Ascending aorta (tissue), 2 donors: ENCODE measurements at regions of chr2 and their contacts with region 1.

Region 1: GRCh38 chr2:26682165-26682564 is 10.4 kb upstream of the KCNK3 start:
- DNase-seq: peak; percentile 29 to 83
- H3K4me3 ChIP-seq: no peak overlapping the region
- H3K27ac ChIP-seq: peak overlapping the region; percentile 83 to 84
- H3K4me1 ChIP-seq: peaks cover 0 to 15% of the 10 kb centered on the region in 2 donors
- H3K27me3 ChIP-seq: no peaks in the 10 kb centered on the region
- CTCF ChIP-seq: no peak

Region 2: GRCh38 chr2:26088032-26088643 is 594.0 kb before region 1 on chr2:
- intact Hi-C with region 1: no loop called
- DNase-seq: no peak
- H3K4me3 ChIP-seq: no peak overlapping the region
- H3K27ac ChIP-seq: no peak overlapping the region
- H3K4me1 ChIP-seq: peaks cover 0 to 13% of the 10 kb centered on the region in 2 donors
- H3K27me3 ChIP-seq: no peaks in the 10 kb centered on the region
- CTCF ChIP-seq: peak; percentile 31 to 56 (median 41)

Region 3: GRCh38 chr2:26456440-26457250 is 225.5 kb before region 1 on chr2:
- intact Hi-C with region 1: no loop called
- DNase-seq: peak in 1 of 2 donors; percentile 53
- H3K4me3 ChIP-seq: no peak overlapping the region
- H3K27ac ChIP-seq: no peak overlapping the region
- H3K4me1 ChIP-seq: no peaks in the 10 kb centered on the region
- H3K27me3 ChIP-seq: no peaks in the 10 kb centered on the region
- CTCF ChIP-seq: no peak

Region 4: DNA sequence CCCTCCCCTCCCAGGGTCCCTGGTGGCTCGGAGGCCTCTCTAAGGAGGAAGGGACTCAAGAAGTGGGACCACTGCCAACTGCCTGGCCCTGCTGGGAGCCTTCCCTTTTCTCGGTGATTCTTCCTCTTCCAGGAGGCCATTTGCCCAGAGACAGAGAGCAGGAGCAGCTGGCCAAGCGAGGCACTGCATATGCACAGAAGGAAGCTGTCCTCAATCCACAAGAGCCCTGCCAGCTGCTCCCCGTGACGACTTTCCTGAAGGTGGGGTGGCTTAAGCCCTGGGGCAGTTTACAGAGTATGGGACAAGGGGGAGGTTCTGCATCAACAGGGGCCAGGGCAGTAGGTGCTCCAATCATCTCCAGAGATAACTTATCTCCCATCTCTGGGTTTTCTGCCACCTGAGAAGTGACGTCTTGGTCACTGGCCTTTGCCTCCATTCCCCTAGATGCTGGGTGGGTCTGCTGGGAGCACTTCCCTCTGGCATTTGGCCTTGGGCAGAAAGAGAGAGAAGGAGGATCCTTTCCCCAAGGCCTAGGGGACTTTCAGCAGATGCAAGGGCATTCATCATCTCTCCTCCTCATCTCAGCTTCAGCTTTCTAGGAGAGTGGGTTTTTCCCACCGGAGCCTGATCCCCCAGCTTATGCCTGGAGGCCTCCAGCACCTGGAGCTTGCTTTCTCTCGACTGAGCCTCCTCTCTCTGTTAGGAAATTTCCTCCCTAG is 69.5 kb before region 1 on chr2:
- intact Hi-C with region 1: loop called (anchors 5 kb)
- DNase-seq: no peak
- H3K4me3 ChIP-seq: no peak overlapping the region
- H3K27ac ChIP-seq: peak overlapping the region; percentile 46 to 57
- H3K4me1 ChIP-seq: peaks cover 16 to 28% of the 10 kb centered on the region in 2 donors
- H3K27me3 ChIP-seq: no peaks in the 10 kb centered on the region
- CTCF ChIP-seq: no peak

Region 5: DNA sequence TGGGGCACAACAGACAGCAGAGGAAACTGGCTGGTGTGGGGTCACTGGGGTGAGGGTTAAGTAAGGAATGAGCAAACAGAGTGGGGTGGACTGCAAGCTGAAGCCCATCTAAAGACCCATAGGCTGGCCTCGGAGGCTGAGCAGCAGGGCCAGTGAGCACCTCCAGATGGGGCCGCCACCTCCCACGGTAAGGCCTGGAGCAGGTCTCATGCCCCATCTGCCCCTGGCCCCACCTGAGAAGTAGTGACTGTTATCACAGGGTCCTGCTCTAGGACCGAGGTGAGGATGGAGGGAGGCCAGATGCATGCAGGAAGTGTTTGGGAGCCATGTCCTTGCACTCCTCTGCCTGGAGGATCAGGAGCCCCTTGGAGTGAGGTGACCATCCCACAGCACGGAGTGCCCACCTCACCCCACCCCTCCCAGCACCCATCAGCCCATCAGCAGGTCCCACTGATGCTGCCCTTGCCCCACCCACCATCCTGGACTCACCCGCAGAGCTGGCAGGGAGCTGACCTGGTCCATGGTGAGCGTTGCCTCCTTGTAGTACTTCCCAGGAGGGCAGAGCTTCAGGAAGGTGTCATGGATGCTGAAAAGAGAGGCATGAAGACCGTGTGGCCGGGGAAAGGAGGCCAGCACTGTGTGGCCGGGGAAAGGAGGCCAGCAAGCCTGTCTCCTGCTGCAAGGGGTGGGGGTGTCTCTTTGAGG is 53.1 kb before region 1 on chr2:
- intact Hi-C with region 1: loop called (anchors 5 kb)
- DNase-seq: no peak
- H3K4me3 ChIP-seq: no peak overlapping the region
- H3K27ac ChIP-seq: no peak overlapping the region
- H3K4me1 ChIP-seq: no peaks in the 10 kb centered on the region
- H3K27me3 ChIP-seq: no peaks in the 10 kb centered on the region
- CTCF ChIP-seq: no peak

Region 6: DNA sequence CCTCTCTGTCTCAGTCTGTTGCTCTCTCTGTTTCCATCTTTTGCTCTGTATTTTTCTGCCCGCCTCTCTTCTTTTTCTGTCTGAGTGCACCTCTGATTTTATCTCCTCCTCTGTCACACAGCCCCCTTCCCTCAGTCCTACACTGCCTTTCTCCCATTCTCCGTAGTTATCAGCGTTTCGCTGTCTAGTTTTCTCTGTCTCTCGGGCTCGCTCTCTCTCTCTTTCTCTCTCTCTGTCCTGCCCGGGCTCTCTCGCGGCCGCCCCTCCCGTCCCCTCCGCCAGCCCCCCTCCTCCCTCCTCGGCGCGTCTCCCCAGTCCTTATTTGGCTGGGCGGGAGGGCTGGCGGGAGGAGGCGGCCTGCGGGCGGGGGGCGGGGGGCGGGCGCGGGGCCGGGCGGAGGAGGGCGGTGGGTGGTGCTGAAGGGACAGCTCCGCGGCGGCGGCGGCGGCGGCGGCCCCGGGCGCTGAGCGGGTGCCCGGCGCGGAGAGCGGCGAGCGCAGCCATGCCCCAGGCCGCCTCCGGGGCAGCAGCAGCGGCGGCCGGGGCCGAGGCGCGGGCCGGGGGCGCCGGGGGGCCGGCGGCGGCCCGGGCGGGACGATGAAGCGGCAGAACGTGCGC is 10.2 kb after region 1 on chr2 and contains the start of gene KCNK3:
- intact Hi-C with region 1: loop called (anchors 1 kb)
- DNase-seq: peak in 1 of 2 donors; percentile 84
- H3K4me3 ChIP-seq: peak within 1 kb of the TSS; percentile 66 to 80
- H3K27ac ChIP-seq: peak within 1 kb of the TSS; percentile 88 to 90
- H3K4me1 ChIP-seq: peaks cover 14 to 19% of the 10 kb centered on the region in 2 donors
- H3K27me3 ChIP-seq: no peaks in the 10 kb centered on the region
- CTCF ChIP-seq: no peak
- total RNA-seq, gene KCNK3: 7.2 TPM

Region 7: DNA sequence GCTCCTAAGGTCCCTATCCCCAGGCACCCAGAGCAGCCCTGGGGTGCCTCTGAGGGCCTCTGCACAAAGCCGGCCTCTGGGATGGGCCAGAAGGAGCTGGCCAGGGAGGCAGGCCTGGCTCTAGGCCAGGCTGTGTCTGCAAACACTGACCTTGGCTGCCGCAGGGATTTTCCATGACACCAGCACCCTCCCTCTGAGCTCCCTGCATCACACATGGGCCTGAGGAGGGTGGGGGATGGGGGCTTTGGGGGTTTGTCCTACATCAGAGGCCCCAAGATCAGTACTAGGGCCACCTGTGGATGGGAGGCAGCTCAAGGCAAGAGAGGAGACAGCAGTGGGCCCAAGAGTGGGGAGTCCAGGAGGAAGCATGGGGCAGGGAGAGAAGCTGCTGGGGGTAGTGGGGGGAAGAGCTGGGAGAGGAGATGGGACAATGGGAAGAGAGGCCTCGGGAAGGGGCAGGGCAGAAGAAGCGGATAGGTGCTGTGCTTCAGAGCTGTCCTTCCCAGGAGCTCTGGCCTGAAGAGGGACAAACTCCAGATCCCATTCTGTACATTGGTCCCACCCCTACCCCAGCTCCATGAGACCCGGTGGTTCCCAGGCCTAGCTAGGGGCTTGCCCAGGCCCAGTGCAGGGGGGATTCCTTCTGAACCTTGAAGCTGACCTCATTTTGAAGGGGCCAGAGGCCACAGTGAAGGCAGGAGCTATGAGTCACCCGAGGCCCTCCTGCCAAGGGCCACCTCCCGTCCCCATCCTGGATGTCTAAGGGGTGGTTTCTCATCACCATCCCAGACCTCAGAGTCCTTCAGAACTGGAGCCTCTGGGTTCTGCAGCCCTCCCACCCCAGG is 38.4 kb after region 1 on chr2:
- intact Hi-C with region 1: loop called (anchors 5 kb)
- DNase-seq: peak; percentile 47 to 92
- H3K4me3 ChIP-seq: no peak overlapping the region
- H3K27ac ChIP-seq: peak overlapping the region; percentile 64 to 70
- H3K4me1 ChIP-seq: peaks cover 27 to 41% of the 10 kb centered on the region in 2 donors
- H3K27me3 ChIP-seq: no peaks in the 10 kb centered on the region
- CTCF ChIP-seq: no peak